ENCODE measurements at regions of chr3 and their contacts with region 1.

Region 1: DNA sequence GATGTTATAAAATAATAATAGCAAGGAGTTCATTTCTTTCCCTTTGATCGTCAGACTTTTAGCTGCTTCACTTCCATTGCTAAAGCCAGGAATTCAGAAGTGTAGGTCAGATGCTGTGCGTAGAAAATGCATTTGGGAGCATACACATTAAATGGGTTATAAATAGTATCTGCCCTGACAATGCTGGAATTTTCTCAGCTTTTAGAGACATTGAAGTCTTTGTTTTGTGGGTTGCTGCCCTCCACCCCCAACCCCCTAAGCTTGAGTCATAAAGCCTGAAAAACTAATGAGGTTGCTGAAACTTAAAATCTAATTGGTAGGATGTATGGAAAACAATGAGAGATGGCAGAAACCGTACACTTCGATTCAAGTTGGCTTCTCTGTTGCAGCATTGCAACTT is 81.9 kb downstream of the MITF start:
- DNase-seq: no peak
- ATAC-seq: no peak
- H3K4me3 ChIP-seq: no peak overlapping the region
- H3K27ac ChIP-seq: no peak overlapping the region
- H3K4me1 ChIP-seq: peaks cover 63% of the 10 kb centered on the region
- H3K27me3 ChIP-seq: no peaks in the 10 kb centered on the region
- CTCF ChIP-seq: no peak

Region 2: DNA sequence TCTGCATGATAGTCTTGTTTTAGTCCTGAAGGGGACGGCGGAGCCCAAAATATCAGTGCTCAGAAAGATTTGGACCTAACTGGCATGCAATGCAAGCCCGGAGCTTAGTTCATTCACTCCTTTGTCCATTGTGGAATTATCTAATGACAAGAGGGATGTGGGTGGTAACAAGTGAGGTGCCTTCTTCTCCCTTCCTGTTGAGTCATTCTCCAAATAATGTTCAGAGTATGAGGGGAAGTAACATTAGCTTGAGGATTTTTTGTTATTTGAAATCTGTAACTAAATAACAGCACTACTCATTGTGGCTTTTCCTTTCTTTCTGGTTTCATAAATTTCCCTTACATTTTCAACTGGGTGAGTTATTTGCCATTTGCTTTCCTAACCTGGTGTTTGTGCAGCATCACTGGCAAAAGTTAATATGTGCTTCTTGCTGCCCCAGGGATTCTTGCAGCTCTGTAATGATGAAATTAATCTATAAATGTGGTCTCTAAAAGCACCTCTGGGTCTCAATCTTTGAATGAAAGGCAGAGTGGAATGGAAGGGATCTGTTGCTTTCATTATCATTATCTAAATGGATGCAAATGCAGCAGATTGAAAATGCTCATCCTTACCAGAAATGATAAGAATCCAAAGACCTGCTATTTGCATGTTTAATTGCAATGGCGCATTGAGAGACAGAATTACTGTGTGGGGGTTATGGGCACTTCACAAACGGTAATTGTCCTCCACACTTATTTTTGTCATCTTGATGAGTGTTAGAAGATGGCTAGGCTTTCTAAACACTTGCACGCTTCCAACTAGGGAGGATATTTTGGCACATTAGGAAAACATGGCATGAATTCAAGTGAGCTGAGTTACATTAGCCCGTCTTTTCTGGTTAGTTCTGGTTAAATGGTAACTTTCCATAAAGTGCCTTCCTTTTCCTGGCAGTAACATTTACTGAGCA is 171.7 kb before region 1 on chr3:
- intact Hi-C with region 1: no loop called
- DNase-seq: no peak
- ATAC-seq: no peak
- H3K4me3 ChIP-seq: no peak overlapping the region
- H3K27ac ChIP-seq: no peak overlapping the region
- H3K4me1 ChIP-seq: no peaks in the 10 kb centered on the region
- H3K27me3 ChIP-seq: peaks cover 0 to 9% (median 0%) of the 10 kb centered on the region in 3 donors
- CTCF ChIP-seq: no peak

Region 3: GRCh38 chr3:69855436-69856162 is 34.5 kb after region 1 on chr3:
- intact Hi-C with region 1: loop called in 1 of 2 experiments (anchors 5 kb)
- DNase-seq: no peak
- ATAC-seq: peak; percentile 50 to 83 (median 68)
- H3K4me3 ChIP-seq: no peak overlapping the region
- H3K27ac ChIP-seq: peak overlapping the region; percentile 23
- H3K4me1 ChIP-seq: peaks cover 44% of the 10 kb centered on the region
- H3K27me3 ChIP-seq: no peaks in the 10 kb centered on the region
- CTCF ChIP-seq: peak; percentile 51

Measured in psoas muscle (tissue), 8 donors.